MCF 10A (cell line): ENCODE measurements at regions of chrX and their contacts with region 1.

Region 1: DNA sequence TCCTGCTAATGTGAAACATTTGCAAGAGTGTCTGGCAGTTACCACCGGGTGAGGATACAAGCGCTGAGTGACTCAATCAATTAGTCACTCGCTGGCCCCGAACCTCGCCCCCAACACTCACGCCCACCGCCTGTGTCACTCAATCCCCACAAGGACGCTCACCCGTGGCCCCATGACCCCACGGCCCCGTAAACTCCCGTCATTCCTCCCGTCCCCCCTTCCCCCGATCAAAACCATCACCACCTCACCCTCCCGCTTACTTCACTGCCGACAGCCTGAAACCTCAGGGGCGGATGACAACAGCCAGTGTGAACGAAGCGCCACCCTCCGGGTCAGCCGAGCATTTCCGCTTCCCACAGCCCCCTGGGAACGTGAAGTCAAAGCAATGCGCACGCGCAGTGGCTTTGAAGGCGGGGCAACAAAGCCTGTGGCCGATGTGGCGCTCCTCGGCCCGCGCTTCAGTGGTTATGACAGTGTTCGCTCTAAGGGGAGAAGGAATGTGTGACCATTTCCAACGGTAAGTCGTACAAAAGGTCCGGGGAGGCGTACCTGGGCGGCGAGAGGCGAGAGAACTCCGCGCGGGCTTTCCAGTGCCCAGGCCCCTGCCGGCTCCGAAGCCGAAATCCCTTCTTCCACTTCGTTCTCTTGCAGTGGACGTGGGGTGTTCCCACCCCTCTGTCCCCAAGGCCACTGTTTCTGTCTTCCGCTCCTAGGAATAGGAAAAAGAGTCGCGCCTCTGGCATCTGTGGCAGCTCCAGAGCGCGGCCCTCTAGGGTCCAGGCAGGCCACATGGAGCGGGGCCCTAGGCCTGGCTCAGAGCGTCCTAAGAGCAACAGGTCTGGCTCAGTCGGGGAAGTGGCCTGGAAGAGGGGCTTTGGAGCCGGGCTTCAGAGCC is at the start of gene ZNF674:
- DNase-seq: peak; percentile 91
- H3K4me3 Mint-ChIP-seq: peak within 1 kb of the TSS; percentile 99
- H3K27ac Mint-ChIP-seq: peak within 1 kb of the TSS; percentile 98
- H3K4me1 Mint-ChIP-seq: peaks cover 6% of the 10 kb centered on the region
- H3K27me3 Mint-ChIP-seq: peaks cover 12% of the 10 kb centered on the region
- CTCF ChIP-seq: peak; percentile 17
- total RNA-seq, gene ZNF674: 7.2 and 9.7 TPM in 2 replicates

Region 2: GRCh38 chrX:46279925-46280313 is 265.4 kb before region 1 on chrX:
- CTCF ChIA-PET with region 1: no interaction called
- POLR2A ChIA-PET with region 1: no interaction called
- intact Hi-C with region 1: no loop called
- DNase-seq: no peak
- H3K4me3 Mint-ChIP-seq: no peak overlapping the region
- H3K27ac Mint-ChIP-seq: no peak overlapping the region
- H3K4me1 Mint-ChIP-seq: peaks cover 6% of the 10 kb centered on the region
- H3K27me3 Mint-ChIP-seq: no peaks in the 10 kb centered on the region
- CTCF ChIP-seq: no peak

Region 3: GRCh38 chrX:46354481-46354880 is 190.9 kb before region 1 on chrX:
- CTCF ChIA-PET with region 1: no interaction called
- POLR2A ChIA-PET with region 1: no interaction called
- intact Hi-C with region 1: no loop called
- DNase-seq: no peak
- H3K4me3 Mint-ChIP-seq: no peak overlapping the region
- H3K27ac Mint-ChIP-seq: no peak overlapping the region
- H3K4me1 Mint-ChIP-seq: no peaks in the 10 kb centered on the region
- H3K27me3 Mint-ChIP-seq: peaks cover 59% of the 10 kb centered on the region
- CTCF ChIP-seq: no peak

Region 4: GRCh38 chrX:46588263-46588662 is 42.9 kb after region 1 on chrX:
- CTCF ChIA-PET with region 1: no interaction called
- POLR2A ChIA-PET with region 1: interaction called, 7 read pairs
- intact Hi-C with region 1: loop called (anchors 5 kb)
- DNase-seq: peak; percentile 53
- H3K4me3 Mint-ChIP-seq: peak overlapping the region; percentile 16
- H3K27ac Mint-ChIP-seq: peak overlapping the region; percentile 42
- H3K4me1 Mint-ChIP-seq: peaks cover 14% of the 10 kb centered on the region
- H3K27me3 Mint-ChIP-seq: peaks cover 25% of the 10 kb centered on the region
- CTCF ChIP-seq: no peak

Region 5: GRCh38 chrX:46642145-46642544 is 96.8 kb after region 1 on chrX:
- CTCF ChIA-PET with region 1: interaction called, 3 read pairs
- POLR2A ChIA-PET with region 1: interaction called, 3 read pairs
- intact Hi-C with region 1: loop called (anchors 2 kb)
- DNase-seq: peak; percentile 38
- H3K4me3 Mint-ChIP-seq: no peak overlapping the region
- H3K27ac Mint-ChIP-seq: no peak overlapping the region
- H3K4me1 Mint-ChIP-seq: no peaks in the 10 kb centered on the region
- H3K27me3 Mint-ChIP-seq: peaks cover 47% of the 10 kb centered on the region
- CTCF ChIP-seq: peak; percentile 27

Region 6: GRCh38 chrX:46884799-46885198 is 339.4 kb after region 1 on chrX:
- CTCF ChIA-PET with region 1: no interaction called
- POLR2A ChIA-PET with region 1: no interaction called
- intact Hi-C with region 1: no loop called
- DNase-seq: no peak
- H3K4me3 Mint-ChIP-seq: no peak overlapping the region
- H3K27ac Mint-ChIP-seq: no peak overlapping the region
- H3K4me1 Mint-ChIP-seq: no peaks in the 10 kb centered on the region
- H3K27me3 Mint-ChIP-seq: peaks cover 31% of the 10 kb centered on the region
- CTCF ChIP-seq: no peak